ENCODE measurements at regions of chr12 and their contacts with region 1.

Region 1: GRCh38 chr12:1690578-1691122 is at the start of gene ADIPOR2:
- DNase-seq: peak; percentile 98
- H3K4me3 ChIP-seq: peak within 1 kb of the TSS; percentile 76 to 95 (median 85)
- H3K27ac ChIP-seq: peak within 1 kb of the TSS; percentile 90 to 97 (median 93)
- H3K4me1 ChIP-seq: peaks cover 0 to 25% (median 19%) of the 10 kb centered on the region in 4 donors
- H3K27me3 ChIP-seq: no peaks in the 10 kb centered on the region
- CTCF ChIP-seq: no peak
- EP300 ChIP-seq: peak in 1 of 4 donors; percentile 80
- POLR2A ChIP-seq: peak; percentile 25 to 50
- total RNA-seq, gene ADIPOR2: 25.2 to 29.6 (median 27.9) TPM

Region 2: GRCh38 chr12:1650260-1650977 is 40.2 kb before region 1 on chr12:
- intact Hi-C with region 1: loop called (anchors 5 kb)
- DNase-seq: no peak
- H3K4me3 ChIP-seq: no peak overlapping the region
- H3K27ac ChIP-seq: peak overlapping the region; percentile 67 to 78 (median 76)
- H3K4me1 ChIP-seq: peaks cover 0 to 62% (median 53%) of the 10 kb centered on the region in 4 donors
- H3K27me3 ChIP-seq: no peaks in the 10 kb centered on the region
- CTCF ChIP-seq: no peak
- EP300 ChIP-seq: no peak
- POLR2A ChIP-seq: no peak

Region 3: DNA sequence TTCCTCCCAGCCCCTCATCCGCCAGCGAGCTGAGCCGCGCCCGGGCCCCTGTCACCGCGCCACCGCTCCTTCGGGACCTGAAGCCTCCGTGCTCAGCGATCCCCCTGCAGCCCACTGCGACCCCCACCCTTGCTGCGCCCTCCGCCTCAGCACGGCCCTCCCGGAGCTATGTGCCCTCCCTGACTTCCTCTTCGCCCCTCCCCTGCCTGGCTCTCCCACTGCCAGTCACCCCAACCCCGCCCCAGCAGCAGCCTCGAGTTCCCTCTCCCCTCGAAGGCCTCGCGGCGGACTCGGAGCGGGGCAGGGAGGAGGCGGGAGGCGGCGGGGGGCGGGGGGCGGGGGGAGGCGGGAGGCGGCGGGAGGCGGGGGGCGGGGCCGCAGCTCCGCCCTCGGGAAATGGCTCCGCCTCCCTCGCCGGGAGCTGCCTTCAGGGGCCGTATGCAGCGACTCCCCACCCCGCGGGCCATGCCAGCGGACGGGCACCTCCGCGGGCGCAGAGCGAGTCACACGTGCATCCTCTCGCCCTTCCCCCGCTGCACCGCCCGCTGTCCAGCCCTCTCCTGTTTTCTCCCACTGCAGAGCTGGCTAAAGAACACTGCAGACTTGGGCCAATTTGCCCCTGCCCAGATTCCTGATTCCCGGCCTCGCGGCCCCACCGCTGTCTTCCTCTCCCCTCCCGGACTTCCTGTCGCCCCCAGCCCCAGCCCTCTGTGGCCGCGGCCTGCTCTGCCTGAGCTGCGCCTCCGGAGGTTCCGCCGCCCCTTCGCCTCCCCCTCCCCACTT is 28.9 kb before region 1 on chr12:
- intact Hi-C with region 1: loop called (anchors 2 kb)
- DNase-seq: peak; percentile 97
- H3K4me3 ChIP-seq: peak overlapping the region; percentile 38 to 55 (median 44)
- H3K27ac ChIP-seq: peak overlapping the region; percentile 84 to 95 (median 89)
- H3K4me1 ChIP-seq: peaks cover 0 to 29% (median 13%) of the 10 kb centered on the region in 4 donors
- H3K27me3 ChIP-seq: no peaks in the 10 kb centered on the region
- CTCF ChIP-seq: no peak
- EP300 ChIP-seq: no peak
- POLR2A ChIP-seq: peak; percentile 6 to 34